ENCODE measurements at regions of chr12 and their contacts with region 1.

Region 1: DNA sequence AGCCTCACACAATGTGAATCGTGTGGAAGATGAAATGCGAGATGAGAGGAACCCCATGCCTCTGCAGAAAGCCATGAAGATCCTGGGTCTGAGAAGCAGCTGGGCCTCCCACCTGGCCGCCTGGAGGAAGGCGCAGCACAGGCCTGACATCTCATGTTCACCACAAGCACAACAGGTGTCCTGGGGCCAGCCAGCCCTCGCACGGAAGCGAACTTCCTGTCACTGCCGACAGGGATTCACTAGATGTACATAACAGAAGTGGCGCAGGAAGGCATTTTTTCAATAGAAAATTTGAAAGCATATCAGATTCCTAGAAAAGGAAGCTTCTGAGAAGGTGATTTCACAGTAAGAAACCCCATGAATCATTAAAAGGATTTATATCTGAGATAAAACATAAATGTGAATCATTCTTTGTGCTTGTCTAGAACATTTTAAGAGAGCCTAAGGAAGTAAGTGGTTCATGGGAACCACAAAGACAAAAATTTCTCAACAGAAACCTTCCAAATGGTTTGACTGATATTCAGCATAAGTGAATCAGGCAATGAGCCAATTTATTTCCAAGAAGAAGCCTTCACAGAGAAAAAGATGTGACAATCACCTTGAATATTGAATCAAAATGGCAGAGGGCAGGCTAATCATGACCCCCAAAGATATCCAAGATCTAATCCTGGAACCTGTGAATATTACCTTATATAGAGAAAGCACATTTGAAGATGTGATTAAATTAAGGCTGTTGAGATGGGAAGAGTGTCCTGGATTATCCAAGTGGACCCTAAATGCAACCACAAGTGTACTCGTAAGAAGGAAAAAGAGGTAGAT is 311.9 kb downstream of the DUSP6 start:
- DNase-seq: peak; percentile 13 to 76 (median 43)
- ATAC-seq: peak; percentile 93
- H3K4me3 ChIP-seq: no peak overlapping the region
- H3K4me3 Mint-ChIP-seq: peak overlapping the region; percentile 29 to 77 (median 54)
- H3K27ac ChIP-seq: no peak overlapping the region
- H3K27ac Mint-ChIP-seq: peak overlapping the region; percentile 1 to 88 (median 68)
- H3K4me1 ChIP-seq: peaks cover 7 to 12% of the 10 kb centered on the region in 2 donors
- H3K4me1 Mint-ChIP-seq: peaks cover 21 to 60% (median 31%) of the 10 kb centered on the region in 7 donors
- H3K27me3 ChIP-seq: no peaks in the 10 kb centered on the region
- H3K27me3 Mint-ChIP-seq: no peaks in the 10 kb centered on the region

Region 2: GRCh38 chr12:89029961-89030360 is 10.4 kb before region 1 on chr12:
- CTCF ChIA-PET with region 1: interaction called, 3 read pairs
- POLR2A ChIA-PET with region 1: interaction called, 3 read pairs
- intact Hi-C with region 1: loop called in 1 of 2 experiments (anchors 1 kb)
- DNase-seq: no peak
- ATAC-seq: no peak
- H3K4me3 ChIP-seq: no peak overlapping the region
- H3K4me3 Mint-ChIP-seq: no peak overlapping the region
- H3K27ac ChIP-seq: no peak overlapping the region
- H3K27ac Mint-ChIP-seq: no peak overlapping the region
- H3K4me1 ChIP-seq: no peaks in the 10 kb centered on the region
- H3K4me1 Mint-ChIP-seq: peaks cover 0 to 20% (median 0%) of the 10 kb centered on the region in 7 donors
- H3K27me3 ChIP-seq: no peaks in the 10 kb centered on the region
- H3K27me3 Mint-ChIP-seq: peaks cover 0 to 8% (median 0%) of the 10 kb centered on the region in 5 donors

Region 3: GRCh38 chr12:89073027-89073398 is 32.7 kb after region 1 on chr12:
- CTCF ChIA-PET with region 1: no interaction called
- POLR2A ChIA-PET with region 1: no interaction called
- intact Hi-C with region 1: no loop called
- DNase-seq: no peak
- ATAC-seq: no peak
- H3K4me3 ChIP-seq: no peak overlapping the region
- H3K4me3 Mint-ChIP-seq: no peak overlapping the region
- H3K27ac ChIP-seq: no peak overlapping the region
- H3K27ac Mint-ChIP-seq: no peak overlapping the region
- H3K4me1 ChIP-seq: no peaks in the 10 kb centered on the region
- H3K4me1 Mint-ChIP-seq: peaks cover 0 to 11% (median 0%) of the 10 kb centered on the region in 7 donors
- H3K27me3 ChIP-seq: no peaks in the 10 kb centered on the region
- H3K27me3 Mint-ChIP-seq: no peaks in the 10 kb centered on the region

Region 4: GRCh38 chr12:89179983-89180382 is 139.6 kb after region 1 on chr12:
- CTCF ChIA-PET with region 1: no interaction called
- POLR2A ChIA-PET with region 1: no interaction called
- intact Hi-C with region 1: loop called in 1 of 2 experiments (anchors 1 kb)
- DNase-seq: no peak
- ATAC-seq: peak; percentile 36
- H3K4me3 ChIP-seq: no peak overlapping the region
- H3K4me3 Mint-ChIP-seq: peak overlapping the region in 1 of 10 donors; percentile 47
- H3K27ac ChIP-seq: no peak overlapping the region
- H3K27ac Mint-ChIP-seq: peak overlapping the region in 1 of 9 donors; percentile 77
- H3K4me1 ChIP-seq: peaks cover 0 to 5% of the 10 kb centered on the region in 2 donors
- H3K4me1 Mint-ChIP-seq: peaks cover 6 to 46% (median 14%) of the 10 kb centered on the region in 7 donors
- H3K27me3 ChIP-seq: no peaks in the 10 kb centered on the region
- H3K27me3 Mint-ChIP-seq: no peaks in the 10 kb centered on the region

Region 5: GRCh38 chr12:89461649-89462612 is 421.6 kb after region 1 on chr12:
- CTCF ChIA-PET with region 1: interaction called, 4 read pairs
- POLR2A ChIA-PET with region 1: no interaction called
- intact Hi-C with region 1: loop called in 1 of 2 experiments (anchors 1 kb)
- DNase-seq: peak in 6 of 9 donors; percentile 26 to 68 (median 54)
- ATAC-seq: peak; percentile 95
- H3K4me3 ChIP-seq: no peak overlapping the region
- H3K4me3 Mint-ChIP-seq: peak overlapping the region in 7 of 10 donors; percentile 10 to 81 (median 53)
- H3K27ac ChIP-seq: no peak overlapping the region
- H3K27ac Mint-ChIP-seq: peak overlapping the region in 6 of 9 donors; percentile 5 to 71 (median 41)
- H3K4me1 ChIP-seq: peaks cover 0 to 3% of the 10 kb centered on the region in 2 donors
- H3K4me1 Mint-ChIP-seq: peaks cover 7 to 52% (median 18%) of the 10 kb centered on the region in 7 donors
- H3K27me3 ChIP-seq: no peaks in the 10 kb centered on the region
- H3K27me3 Mint-ChIP-seq: no peaks in the 10 kb centered on the region

Region 6: GRCh38 chr12:89949457-89950195 is 909.3 kb after region 1 on chr12:
- CTCF ChIA-PET with region 1: no interaction called
- POLR2A ChIA-PET with region 1: no interaction called
- intact Hi-C with region 1: loop called in 1 of 2 experiments (anchors 10 kb)
- DNase-seq: peak in 7 of 9 donors; percentile 66 to 89 (median 81)
- ATAC-seq: peak; percentile 95
- H3K4me3 ChIP-seq: peak overlapping the region; percentile 2
- H3K4me3 Mint-ChIP-seq: peak overlapping the region in 9 of 10 donors; percentile 1 to 76 (median 64)
- H3K27ac ChIP-seq: peak overlapping the region; percentile 53
- H3K27ac Mint-ChIP-seq: peak overlapping the region in 8 of 9 donors; percentile 62 to 89 (median 76)
- H3K4me1 ChIP-seq: peaks cover 24 to 33% of the 10 kb centered on the region in 2 donors
- H3K4me1 Mint-ChIP-seq: peaks cover 20 to 58% (median 44%) of the 10 kb centered on the region in 7 donors
- H3K27me3 ChIP-seq: no peaks in the 10 kb centered on the region
- H3K27me3 Mint-ChIP-seq: no peaks in the 10 kb centered on the region

Measured in naive thymus-derived CD4-positive, alpha-beta T cell (primary cell).